Esophagus muscularis mucosa (tissue), 4 donors: ENCODE measurements at regions of chr10 and their contacts with region 1.

Region 1: DNA sequence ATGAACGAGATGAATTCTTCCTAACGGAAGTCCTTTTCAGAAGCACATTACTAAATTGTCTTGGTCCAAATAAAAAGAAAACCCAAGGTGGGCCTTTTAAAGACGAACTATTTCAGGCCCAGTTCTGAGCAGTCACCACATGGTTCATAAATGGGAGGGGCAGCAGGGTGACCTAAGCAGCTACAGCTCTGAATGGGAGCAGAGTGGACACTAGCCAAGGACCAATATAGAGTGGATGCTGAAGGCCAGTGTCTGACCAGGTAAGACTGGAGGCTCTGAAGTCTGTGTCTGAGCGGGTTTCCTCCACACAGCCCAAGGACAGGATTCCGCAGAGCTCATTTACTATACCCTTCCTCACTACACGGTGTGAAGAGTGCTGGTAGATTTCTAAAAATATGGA is 159.1 kb downstream of the TMEM26 start:
- DNase-seq: no peak
- H3K4me3 ChIP-seq: no peak overlapping the region
- H3K27ac ChIP-seq: peak overlapping the region; percentile 50 to 64 (median 56)
- H3K4me1 ChIP-seq: peaks cover 0 to 18% (median 17%) of the 10 kb centered on the region in 4 donors
- H3K27me3 ChIP-seq: no peaks in the 10 kb centered on the region
- CTCF ChIP-seq: no peak
- EP300 ChIP-seq: no peak
- POLR2A ChIP-seq: no peak

Region 2: GRCh38 chr10:61733358-61733940 is 439.3 kb after region 1 on chr10:
- intact Hi-C with region 1: loop called (anchors 10 kb)
- DNase-seq: no peak
- H3K4me3 ChIP-seq: no peak overlapping the region
- H3K27ac ChIP-seq: no peak overlapping the region
- H3K4me1 ChIP-seq: no peaks in the 10 kb centered on the region
- H3K27me3 ChIP-seq: no peaks in the 10 kb centered on the region
- CTCF ChIP-seq: peak; percentile 53 to 62 (median 61)
- EP300 ChIP-seq: no peak
- POLR2A ChIP-seq: no peak